Mammary epithelial cell (primary cell): ENCODE measurements at regions of chr1 and their contacts with region 1.

Region 1: GRCh38 chr1:23168457-23169194 is at the start of gene LUZP1:
- DNase-seq: peak; percentile 80
- H3K4me3 ChIP-seq: peak within 1 kb of the TSS; percentile 66 to 99 (median 85)
- H3K27ac ChIP-seq: peak within 1 kb of the TSS; percentile 94
- H3K4me1 ChIP-seq: peaks cover 42% of the 10 kb centered on the region
- H3K27me3 ChIP-seq: no peaks in the 10 kb centered on the region
- CTCF ChIP-seq: no peak
- total RNA-seq, gene LUZP1: 55.2 to 83.2 TPM

Region 2: GRCh38 chr1:23019094-23019862 is 149.3 kb before region 1 on chr1 and contains the start of gene KDM1A:
- CTCF ChIA-PET with region 1: no interaction called
- dilution Hi-C with region 1: no loop called
- in situ Hi-C with region 1: no loop called
- intact Hi-C with region 1: loop called (anchors 1 kb)
- DNase-seq: peak; percentile 97
- H3K4me3 ChIP-seq: peak within 1 kb of the TSS; percentile 81 to 99 (median 86)
- H3K27ac ChIP-seq: peak within 1 kb of the TSS; percentile 91
- H3K4me1 ChIP-seq: no peaks in the 10 kb centered on the region
- H3K27me3 ChIP-seq: no peaks in the 10 kb centered on the region
- CTCF ChIP-seq: peak; percentile 19 to 25
- total RNA-seq, gene KDM1A: 65.1 to 65.8 TPM

Region 3: GRCh38 chr1:23118957-23119792 is 49.5 kb before region 1 on chr1:
- CTCF ChIA-PET with region 1: no interaction called
- dilution Hi-C with region 1: loop called (anchors 10 kb)
- in situ Hi-C with region 1: no loop called
- intact Hi-C with region 1: no loop called
- DNase-seq: no peak
- H3K4me3 ChIP-seq: no peak overlapping the region
- H3K27ac ChIP-seq: peak overlapping the region; percentile 6
- H3K4me1 ChIP-seq: peaks cover 37% of the 10 kb centered on the region
- H3K27me3 ChIP-seq: no peaks in the 10 kb centered on the region
- CTCF ChIP-seq: no peak

Region 4: DNA sequence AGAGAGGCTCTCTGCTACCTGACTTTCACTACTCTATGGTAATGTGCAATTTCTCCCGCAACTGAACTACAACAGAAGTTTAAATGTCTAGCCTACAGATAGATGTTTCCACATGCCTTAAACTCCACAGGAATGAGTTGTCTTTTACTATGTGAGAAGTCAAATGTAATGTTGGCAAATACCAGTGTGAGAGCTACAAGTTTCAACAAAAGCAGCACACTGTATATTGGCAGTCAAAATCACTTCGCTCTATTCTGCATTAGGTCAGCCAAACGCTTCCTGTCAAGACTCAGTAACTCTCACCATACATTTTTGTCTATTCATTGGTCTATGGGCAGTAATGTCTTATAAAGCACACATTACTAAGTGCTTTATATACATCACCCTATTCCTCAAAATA is 41.8 kb before region 1 on chr1:
- CTCF ChIA-PET with region 1: no interaction called
- dilution Hi-C with region 1: no loop called
- in situ Hi-C with region 1: no loop called
- intact Hi-C with region 1: loop called (anchors 2 kb)
- DNase-seq: peak; percentile 91
- H3K4me3 ChIP-seq: peak overlapping the region in 2 of 3 experiments; percentile 3 to 8
- H3K27ac ChIP-seq: peak overlapping the region; percentile 68
- H3K4me1 ChIP-seq: peaks cover 60% of the 10 kb centered on the region
- H3K27me3 ChIP-seq: no peaks in the 10 kb centered on the region
- CTCF ChIP-seq: no peak

Region 5: GRCh38 chr1:23263380-23263887 is 94.8 kb after region 1 on chr1:
- CTCF ChIA-PET with region 1: no interaction called
- dilution Hi-C with region 1: no loop called
- in situ Hi-C with region 1: no loop called
- intact Hi-C with region 1: no loop called
- DNase-seq: no peak
- H3K4me3 ChIP-seq: no peak overlapping the region
- H3K27ac ChIP-seq: no peak overlapping the region
- H3K4me1 ChIP-seq: peaks cover 3% of the 10 kb centered on the region
- H3K27me3 ChIP-seq: no peaks in the 10 kb centered on the region
- CTCF ChIP-seq: no peak